PC-3 (cell line): ENCODE measurements at regions of chr18 and their contacts with region 1.

Region 1: DNA sequence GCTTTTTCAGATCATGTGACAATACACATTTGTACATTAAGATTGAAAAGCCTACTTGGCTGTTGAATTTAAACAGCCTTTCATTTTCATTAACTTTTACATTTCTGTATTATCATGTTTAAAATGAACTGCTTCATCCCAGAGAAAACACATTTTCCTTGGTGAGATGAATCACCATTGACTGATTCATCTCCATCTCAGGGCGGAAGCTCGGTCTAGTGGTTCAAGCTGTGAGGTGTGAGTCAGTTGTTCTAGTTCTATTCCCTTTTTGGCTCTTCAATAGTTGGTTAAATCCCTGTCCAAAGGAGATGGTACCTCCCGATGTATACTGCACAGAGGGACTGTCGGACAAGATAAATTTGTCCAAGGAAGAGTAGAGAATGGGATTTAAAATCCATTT is 189.7 kb downstream of the ADCYAP1 start:
- DNase-seq: peak; percentile 76
- ATAC-seq: peak; percentile 87
- H3K4me3 ChIP-seq: no peak overlapping the region
- H3K27ac ChIP-seq: no peak overlapping the region
- H3K4me1 ChIP-seq: no peaks in the 10 kb centered on the region
- H3K27me3 ChIP-seq: no peaks in the 10 kb centered on the region
- CTCF ChIP-seq: no peak

Region 2: DNA sequence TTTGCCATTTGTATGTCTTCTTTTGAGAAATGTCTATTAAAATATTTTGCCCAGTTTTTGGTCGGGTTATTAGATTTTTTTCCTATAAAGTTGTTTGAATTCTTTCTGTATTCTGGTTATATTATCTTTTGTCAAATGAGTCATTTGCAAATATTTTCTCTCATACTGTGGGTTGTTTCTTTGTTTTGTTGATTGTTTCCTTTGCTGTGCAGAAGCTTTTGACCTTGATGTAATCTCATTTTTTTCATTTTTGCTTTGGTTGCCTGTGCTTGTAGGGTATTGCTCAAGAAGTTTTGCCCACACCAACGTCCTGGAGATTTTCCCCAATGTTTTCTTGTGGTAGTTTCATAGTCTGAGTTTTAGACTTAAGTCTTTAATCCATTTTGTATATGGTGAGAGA is 55.9 kb after region 1 on chr18:
- CTCF ChIA-PET with region 1: no interaction called
- POLR2A ChIA-PET with region 1: no interaction called
- intact Hi-C with region 1: loop called (anchors 10 kb)
- DNase-seq: peak; percentile 43
- ATAC-seq: peak; percentile 68
- H3K4me3 ChIP-seq: no peak overlapping the region
- H3K27ac ChIP-seq: no peak overlapping the region
- H3K4me1 ChIP-seq: no peaks in the 10 kb centered on the region
- H3K27me3 ChIP-seq: no peaks in the 10 kb centered on the region
- CTCF ChIP-seq: no peak